GM12878 (cell line): ENCODE measurements at regions of chr9 and their contacts with region 1.

Region 1: GRCh38 chr9:79646096-79646495 is 74.3 kb downstream of the TLE4 start:
- DNase-seq: no peak
- ATAC-seq: no peak
- H3K4me3 ChIP-seq: no peak overlapping the region
- H3K27ac ChIP-seq: no peak overlapping the region
- H3K4me1 ChIP-seq: no peaks in the 10 kb centered on the region
- H3K27me3 ChIP-seq: no peaks in the 10 kb centered on the region
- CTCF ChIP-seq: no peak
- EP300 ChIP-seq: no peak
- POLR2A ChIP-seq: no peak
- RAD21 ChIP-seq: no peak

Region 2: DNA sequence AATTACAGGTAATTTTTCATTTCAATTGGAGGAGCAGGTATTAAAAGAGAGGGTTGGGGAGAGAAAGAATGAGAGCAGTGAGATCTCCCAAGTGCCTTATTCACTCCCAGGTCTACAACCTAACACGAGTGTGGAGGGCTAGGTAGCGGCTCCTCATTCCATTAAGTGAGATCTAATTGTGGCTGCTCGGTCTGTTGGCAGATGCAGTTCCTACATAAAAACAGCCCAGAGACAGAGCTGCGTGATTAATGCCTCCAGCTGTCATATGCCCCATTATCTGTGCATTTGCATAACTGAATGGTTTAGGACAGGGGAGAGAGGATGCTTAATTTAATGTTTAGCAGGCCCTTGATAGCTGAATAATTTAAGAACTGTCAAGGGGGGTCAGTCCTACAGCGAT is 1248.6 kb before region 1 on chr9:
- CTCF ChIA-PET with region 1: no interaction called
- POLR2A ChIA-PET with region 1: no interaction called
- RAD21 ChIA-PET with region 1: no interaction called
- SMC1A ChIA-PET with region 1: no interaction called
- in situ Hi-C with region 1: no loop called
- intact Hi-C with region 1: no loop called
- DNase-seq: no peak
- ATAC-seq: no peak
- H3K4me3 ChIP-seq: no peak overlapping the region
- H3K27ac ChIP-seq: no peak overlapping the region
- H3K4me1 ChIP-seq: no peaks in the 10 kb centered on the region
- H3K27me3 ChIP-seq: no peaks in the 10 kb centered on the region
- CTCF ChIP-seq: no peak
- EP300 ChIP-seq: no peak
- POLR2A ChIP-seq: no peak
- RAD21 ChIP-seq: no peak

Region 3: DNA sequence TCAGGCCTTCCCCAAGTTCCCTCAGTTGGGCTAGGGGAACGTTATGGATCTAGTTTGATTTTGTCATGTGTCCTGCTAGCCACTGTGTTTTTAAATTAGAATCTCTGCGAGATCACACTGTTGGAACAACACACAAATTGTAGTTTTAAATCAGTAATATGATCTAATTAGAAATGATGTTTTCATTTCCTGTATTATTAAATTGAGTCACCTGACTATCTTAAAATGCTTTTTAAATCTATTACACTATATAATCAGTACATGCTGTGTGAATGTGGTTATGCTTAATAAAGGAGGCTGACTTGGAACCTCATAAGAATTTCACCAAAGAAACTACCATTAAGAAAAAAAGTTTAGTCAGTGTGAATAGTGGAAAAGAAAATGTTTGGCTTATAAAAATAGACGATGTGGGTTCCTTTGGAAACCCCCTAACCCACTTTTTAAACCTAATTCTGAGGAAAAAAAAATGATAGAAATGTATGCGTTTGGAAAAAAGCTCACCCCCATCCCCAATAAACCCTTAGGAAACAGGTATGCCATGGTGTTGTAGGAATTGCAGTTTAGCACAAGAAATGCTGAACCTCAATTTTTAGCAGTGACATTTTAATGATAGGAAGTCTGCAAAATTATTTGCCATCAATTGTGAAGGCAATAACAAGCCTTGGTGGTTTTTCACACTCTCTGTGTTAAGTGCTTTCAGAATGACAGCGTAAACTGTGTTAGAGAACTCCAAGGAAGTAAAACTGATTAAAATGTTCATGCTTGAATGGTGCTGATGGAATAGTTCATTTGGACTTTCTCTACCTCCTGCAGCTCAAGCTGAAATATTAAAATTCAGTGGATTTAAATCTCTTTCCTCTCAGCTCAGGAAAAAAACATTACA is 15.3 kb before region 1 on chr9:
- CTCF ChIA-PET with region 1: interaction called, 11 read pairs
- POLR2A ChIA-PET with region 1: interaction called, 3 read pairs
- RAD21 ChIA-PET with region 1: no interaction called
- SMC1A ChIA-PET with region 1: interaction called, 9 read pairs
- in situ Hi-C with region 1: no loop called
- intact Hi-C with region 1: no loop called
- DNase-seq: peak; percentile 49
- ATAC-seq: peak; percentile 93
- H3K4me3 ChIP-seq: peak overlapping the region; percentile 31; the same call in 1 of the 2 replicates
- H3K27ac ChIP-seq: peak overlapping the region; percentile 30; the same call in 1 of the 2 replicates
- H3K4me1 ChIP-seq: peaks cover 8% of the 10 kb centered on the region
- H3K27me3 ChIP-seq: no peaks in the 10 kb centered on the region
- CTCF ChIP-seq: no peak
- EP300 ChIP-seq: peak; percentile 60 to 94
- POLR2A ChIP-seq: no peak
- RAD21 ChIP-seq: no peak